Naive thymus-derived CD4-positive, alpha-beta T cell (primary cell): ENCODE measurements at regions of chr1 and their contacts with region 1.

Region 1: GRCh38 chr1:151993654-151994496 is at the start of gene S100A10:
- DNase-seq: peak; percentile 64 to 82 (median 81)
- ATAC-seq: peak; percentile 85
- H3K4me3 ChIP-seq: peak within 1 kb of the TSS; percentile 88
- H3K4me3 Mint-ChIP-seq: peak within 1 kb of the TSS; percentile 90 to 100 (median 96)
- H3K27ac ChIP-seq: peak within 1 kb of the TSS; percentile 83
- H3K27ac Mint-ChIP-seq: peak within 1 kb of the TSS; percentile 89 to 98 (median 95)
- H3K4me1 ChIP-seq: peaks cover 22 to 37% of the 10 kb centered on the region in 2 donors
- H3K4me1 Mint-ChIP-seq: peaks cover 33 to 56% (median 45%) of the 10 kb centered on the region in 7 donors
- H3K27me3 ChIP-seq: no peaks in the 10 kb centered on the region
- H3K27me3 Mint-ChIP-seq: peaks cover 0 to 10% (median 0%) of the 10 kb centered on the region in 5 donors
- total RNA-seq, gene S100A10: 131 to 361 (median 143) TPM

Region 2: GRCh38 chr1:151443846-151444782 is 549.8 kb before region 1 on chr1:
- CTCF ChIA-PET with region 1: no interaction called
- POLR2A ChIA-PET with region 1: no interaction called
- intact Hi-C with region 1: loop called in 1 of 2 experiments (anchors 5 kb)
- DNase-seq: peak; percentile 17 to 73 (median 66)
- ATAC-seq: peak; percentile 98
- H3K4me3 ChIP-seq: no peak overlapping the region
- H3K4me3 Mint-ChIP-seq: peak overlapping the region in 1 of 10 donors; percentile 8
- H3K27ac ChIP-seq: no peak overlapping the region
- H3K27ac Mint-ChIP-seq: peak overlapping the region in 3 of 9 donors; percentile 29 to 61 (median 44)
- H3K4me1 ChIP-seq: peaks cover 0 to 4% of the 10 kb centered on the region in 2 donors
- H3K4me1 Mint-ChIP-seq: peaks cover 24 to 76% (median 60%) of the 10 kb centered on the region in 7 donors
- H3K27me3 ChIP-seq: no peaks in the 10 kb centered on the region
- H3K27me3 Mint-ChIP-seq: no peaks in the 10 kb centered on the region

Region 3: GRCh38 chr1:151693076-151693651 is 300.7 kb before region 1 on chr1:
- CTCF ChIA-PET with region 1: no interaction called
- POLR2A ChIA-PET with region 1: no interaction called
- intact Hi-C with region 1: loop called in 1 of 2 experiments (anchors 10 kb)
- DNase-seq: no peak
- ATAC-seq: no peak
- H3K4me3 ChIP-seq: no peak overlapping the region
- H3K4me3 Mint-ChIP-seq: no peak overlapping the region
- H3K27ac ChIP-seq: no peak overlapping the region
- H3K27ac Mint-ChIP-seq: peak overlapping the region in 1 of 9 donors; percentile 17
- H3K4me1 ChIP-seq: no peaks in the 10 kb centered on the region
- H3K4me1 Mint-ChIP-seq: peaks cover 0 to 9% (median 0%) of the 10 kb centered on the region in 7 donors
- H3K27me3 ChIP-seq: no peaks in the 10 kb centered on the region
- H3K27me3 Mint-ChIP-seq: no peaks in the 10 kb centered on the region

Region 4: GRCh38 chr1:151839457-151840405 is 154.1 kb before region 1 on chr1 and contains the start of gene C2CD4D:
- CTCF ChIA-PET with region 1: no interaction called
- POLR2A ChIA-PET with region 1: interaction called, 3 read pairs
- intact Hi-C with region 1: loop called (anchors 1 to 2 kb)
- DNase-seq: peak; percentile 42 to 77 (median 66)
- ATAC-seq: peak; percentile 89
- H3K4me3 ChIP-seq: peak within 1 kb of the TSS; percentile 68
- H3K4me3 Mint-ChIP-seq: peak within 1 kb of the TSS; percentile 68 to 89 (median 82)
- H3K27ac ChIP-seq: peak within 1 kb of the TSS; percentile 55
- H3K27ac Mint-ChIP-seq: peak within 1 kb of the TSS; percentile 31 to 87 (median 77)
- H3K4me1 ChIP-seq: peaks cover 27 to 38% of the 10 kb centered on the region in 2 donors
- H3K4me1 Mint-ChIP-seq: peaks cover 33 to 53% (median 40%) of the 10 kb centered on the region in 7 donors
- H3K27me3 ChIP-seq: no peaks in the 10 kb centered on the region
- H3K27me3 Mint-ChIP-seq: peaks cover 0 to 8% (median 0%) of the 10 kb centered on the region in 5 donors
- total RNA-seq, gene C2CD4D: 0.34 to 0.87 TPM in 2 of 5 experiments, not detected in the others

Region 5: GRCh38 chr1:151849871-151850270 is 144.0 kb before region 1 on chr1:
- CTCF ChIA-PET with region 1: no interaction called
- POLR2A ChIA-PET with region 1: no interaction called
- intact Hi-C with region 1: no loop called
- DNase-seq: no peak
- ATAC-seq: no peak
- H3K4me3 ChIP-seq: no peak overlapping the region
- H3K4me3 Mint-ChIP-seq: no peak overlapping the region
- H3K27ac ChIP-seq: no peak overlapping the region
- H3K27ac Mint-ChIP-seq: no peak overlapping the region
- H3K4me1 ChIP-seq: no peaks in the 10 kb centered on the region
- H3K4me1 Mint-ChIP-seq: peaks cover 0 to 14% (median 0%) of the 10 kb centered on the region in 7 donors
- H3K27me3 ChIP-seq: no peaks in the 10 kb centered on the region
- H3K27me3 Mint-ChIP-seq: peaks cover 0 to 7% (median 0%) of the 10 kb centered on the region in 5 donors

Region 6: DNA sequence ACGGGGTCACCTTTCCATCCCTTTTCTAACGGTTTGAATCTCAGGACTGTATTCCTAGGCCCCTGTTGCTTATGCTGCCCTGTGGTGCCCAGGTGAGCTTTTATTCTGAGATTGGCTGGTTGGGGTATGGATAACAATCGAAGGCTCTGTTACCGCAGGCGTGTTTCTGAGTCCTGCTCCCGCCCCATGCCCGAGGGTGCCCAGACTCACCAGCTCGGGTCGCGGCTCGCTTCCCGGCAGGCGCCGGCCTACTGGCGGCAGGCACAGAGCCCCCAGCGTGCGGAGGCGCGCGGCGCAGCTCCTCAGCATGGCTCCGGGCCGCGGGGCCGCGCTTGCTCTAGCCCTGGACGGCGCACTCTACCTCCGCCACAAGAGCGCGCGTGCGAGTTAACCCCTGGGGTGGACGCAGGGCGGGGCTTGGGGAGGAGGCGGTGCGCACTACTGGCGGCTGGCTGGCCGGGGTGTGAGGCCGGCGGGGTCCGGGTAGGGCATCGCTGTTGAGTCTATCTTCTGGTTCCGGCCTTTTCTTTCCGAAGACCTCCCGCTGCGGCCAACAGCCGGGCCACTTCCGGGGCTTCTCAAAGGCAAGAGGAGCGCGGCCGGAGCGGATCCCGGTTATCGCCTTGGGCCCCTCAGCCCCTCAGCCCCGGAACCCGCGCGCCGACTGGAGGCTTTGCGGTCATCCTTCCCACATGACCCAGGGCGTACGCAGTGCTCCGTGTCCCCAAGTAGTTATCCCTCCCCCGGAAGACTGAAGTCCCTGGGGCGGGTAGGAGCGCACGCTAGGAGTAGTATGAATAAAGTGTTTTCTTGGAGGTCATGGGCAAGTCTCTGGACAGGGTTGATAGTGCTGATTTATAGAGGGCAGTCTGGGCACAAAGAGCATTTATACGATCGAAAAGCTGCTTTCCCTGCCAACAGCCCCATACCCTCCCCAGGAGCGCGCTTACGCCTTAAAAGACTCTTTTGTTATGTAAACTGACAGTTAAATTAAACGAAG is 84.4 kb before region 1 on chr1 and contains the start of gene THEM4:
- CTCF ChIA-PET with region 1: interaction called, 4 read pairs
- POLR2A ChIA-PET with region 1: interaction called, 3 read pairs
- intact Hi-C with region 1: loop called in 1 of 2 experiments (anchors 1 kb)
- DNase-seq: peak; percentile 67 to 94 (median 80)
- ATAC-seq: peak; percentile 97
- H3K4me3 ChIP-seq: peak within 1 kb of the TSS; percentile 67
- H3K4me3 Mint-ChIP-seq: peak within 1 kb of the TSS; percentile 79 to 93 (median 88)
- H3K27ac ChIP-seq: peak within 1 kb of the TSS; percentile 82
- H3K27ac Mint-ChIP-seq: peak within 1 kb of the TSS; percentile 82 to 98 (median 90)
- H3K4me1 ChIP-seq: peaks cover 23 to 39% of the 10 kb centered on the region in 2 donors
- H3K4me1 Mint-ChIP-seq: peaks cover 21 to 47% (median 37%) of the 10 kb centered on the region in 7 donors
- H3K27me3 ChIP-seq: no peaks in the 10 kb centered on the region
- H3K27me3 Mint-ChIP-seq: peaks cover 0 to 8% (median 0%) of the 10 kb centered on the region in 5 donors
- total RNA-seq, gene THEM4: 37.6 to 143 (median 44.6) TPM

Region 7: GRCh38 chr1:151945725-151946364 is 48.0 kb before region 1 on chr1:
- CTCF ChIA-PET with region 1: interaction called, 3 read pairs
- POLR2A ChIA-PET with region 1: no interaction called
- intact Hi-C with region 1: loop called in 1 of 2 experiments (anchors 1 kb)
- DNase-seq: peak in 8 of 9 donors; percentile 20 to 70 (median 45)
- ATAC-seq: peak; percentile 78
- H3K4me3 ChIP-seq: no peak overlapping the region
- H3K4me3 Mint-ChIP-seq: peak overlapping the region in 4 of 10 donors; percentile 8 to 73 (median 28)
- H3K27ac ChIP-seq: no peak overlapping the region
- H3K27ac Mint-ChIP-seq: peak overlapping the region in 6 of 9 donors; percentile 5 to 91 (median 45)
- H3K4me1 ChIP-seq: peaks cover 9 to 24% of the 10 kb centered on the region in 2 donors
- H3K4me1 Mint-ChIP-seq: peaks cover 11 to 38% (median 15%) of the 10 kb centered on the region in 7 donors
- H3K27me3 ChIP-seq: no peaks in the 10 kb centered on the region
- H3K27me3 Mint-ChIP-seq: peaks cover 0 to 3% (median 0%) of the 10 kb centered on the region in 5 donors

Region 8: GRCh38 chr1:152034646-152035405 is 41.0 kb after region 1 on chr1:
- CTCF ChIA-PET with region 1: no interaction called
- POLR2A ChIA-PET with region 1: interaction called, 3 read pairs
- intact Hi-C with region 1: loop called (anchors 1 to 2 kb)
- DNase-seq: peak in 8 of 9 donors; percentile 60 to 78 (median 74)
- ATAC-seq: peak; percentile 82
- H3K4me3 ChIP-seq: peak overlapping the region; percentile 70
- H3K4me3 Mint-ChIP-seq: peak overlapping the region; percentile 88 to 99 (median 96)
- H3K27ac ChIP-seq: peak overlapping the region; percentile 81
- H3K27ac Mint-ChIP-seq: peak overlapping the region; percentile 95 to 100 (median 98)
- H3K4me1 ChIP-seq: peaks cover 21 to 22% of the 10 kb centered on the region in 2 donors
- H3K4me1 Mint-ChIP-seq: peaks cover 26 to 60% (median 41%) of the 10 kb centered on the region in 7 donors
- H3K27me3 ChIP-seq: no peaks in the 10 kb centered on the region
- H3K27me3 Mint-ChIP-seq: no peaks in the 10 kb centered on the region

Region 9: DNA sequence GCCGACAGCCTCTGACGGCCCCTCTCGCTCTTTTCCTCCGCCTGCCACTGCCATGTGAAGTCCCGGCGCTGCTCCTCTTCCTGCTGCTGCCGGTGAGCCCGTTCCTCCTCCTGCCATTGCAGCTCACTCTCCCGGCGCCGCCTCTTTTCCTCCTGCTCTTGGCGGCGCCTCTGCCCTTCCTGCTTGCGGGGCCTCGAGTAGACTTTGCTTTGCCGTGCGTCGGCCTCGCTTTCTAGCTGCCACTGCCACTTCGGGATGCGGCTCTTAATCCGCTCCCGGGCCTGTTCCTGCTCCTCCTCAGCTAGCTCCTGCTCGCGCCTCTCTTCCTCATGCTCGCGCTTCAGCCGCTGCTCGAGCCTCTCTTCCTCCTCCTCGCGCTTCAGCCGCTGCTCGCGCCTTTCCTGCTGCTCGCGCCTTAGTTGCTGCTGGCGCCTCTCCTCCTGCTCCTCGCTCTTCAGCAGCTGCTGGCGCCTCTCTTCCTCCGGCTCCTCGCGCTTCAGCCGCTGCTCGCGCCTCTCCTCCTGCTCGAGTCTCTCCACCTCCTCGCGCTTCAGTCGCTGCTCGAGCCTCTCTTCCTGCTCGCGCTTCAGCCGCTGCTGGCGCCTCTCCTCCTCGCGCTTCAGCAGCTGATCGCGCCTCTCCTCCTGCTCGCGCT is 117.1 kb after region 1 on chr1:
- CTCF ChIA-PET with region 1: no interaction called
- POLR2A ChIA-PET with region 1: no interaction called
- intact Hi-C with region 1: no loop called
- DNase-seq: peak in 3 of 9 donors; percentile 10 to 42 (median 25)
- ATAC-seq: peak; percentile 52
- H3K4me3 ChIP-seq: peak overlapping the region; percentile 63
- H3K4me3 Mint-ChIP-seq: no peak overlapping the region
- H3K27ac ChIP-seq: no peak overlapping the region
- H3K27ac Mint-ChIP-seq: no peak overlapping the region
- H3K4me1 ChIP-seq: peaks cover 23 to 28% of the 10 kb centered on the region in 2 donors
- H3K4me1 Mint-ChIP-seq: peaks cover 0 to 12% (median 0%) of the 10 kb centered on the region in 7 donors
- H3K27me3 ChIP-seq: peaks cover 4 to 55% of the 10 kb centered on the region in 2 donors
- H3K27me3 Mint-ChIP-seq: peaks cover 3 to 28% (median 5%) of the 10 kb centered on the region in 5 donors